ENCODE measurements at regions of chr12 and their contacts with region 1.

Region 1: DNA sequence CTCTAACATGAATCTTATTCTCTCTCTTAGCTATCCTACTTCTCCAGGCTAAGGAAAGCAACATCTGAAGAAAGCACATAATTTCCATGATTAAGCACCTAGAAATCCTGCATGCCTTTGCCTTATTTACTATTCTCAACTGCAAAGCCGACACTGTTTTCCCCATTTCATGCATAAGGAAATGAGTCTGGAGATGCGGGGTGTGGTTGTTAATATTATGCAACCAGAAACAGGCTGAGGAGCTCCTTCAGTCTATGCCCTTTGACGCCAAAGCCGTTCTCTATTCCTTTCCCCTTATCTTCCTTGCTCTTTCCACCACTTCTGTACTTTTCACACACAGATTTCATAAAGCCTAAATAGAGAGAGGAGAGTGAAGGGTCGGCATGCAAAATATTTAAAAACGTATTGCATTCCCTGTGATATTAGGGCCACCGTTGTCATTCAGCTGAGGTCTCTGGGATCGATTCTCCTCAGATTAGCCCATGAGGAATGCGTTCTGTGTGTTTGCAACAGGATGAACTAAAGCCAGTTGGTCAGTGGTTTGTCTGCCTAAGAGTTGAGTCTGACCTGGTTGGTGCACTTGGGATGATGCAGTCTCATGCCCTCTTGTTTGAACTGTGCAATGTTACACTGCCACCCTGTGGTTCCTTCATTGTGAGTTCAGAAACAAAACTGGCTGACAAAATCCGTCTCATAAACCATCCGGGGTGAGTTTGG is 53.1 kb upstream of the PLEKHG7 start:
- DNase-seq: peak; percentile 65
- H3K4me3 ChIP-seq: no peak overlapping the region; a peak in 1 of 4 replicates
- H3K27ac ChIP-seq: no peak overlapping the region
- H3K4me1 ChIP-seq: no peaks in the 10 kb centered on the region; a peak in 1 of 4 replicates
- H3K27me3 ChIP-seq: no peaks in the 10 kb centered on the region
- CTCF ChIP-seq: peak; percentile 80
- EP300 ChIP-seq: no peak
- RAD21 ChIP-seq: peak; percentile 94

Region 2: DNA sequence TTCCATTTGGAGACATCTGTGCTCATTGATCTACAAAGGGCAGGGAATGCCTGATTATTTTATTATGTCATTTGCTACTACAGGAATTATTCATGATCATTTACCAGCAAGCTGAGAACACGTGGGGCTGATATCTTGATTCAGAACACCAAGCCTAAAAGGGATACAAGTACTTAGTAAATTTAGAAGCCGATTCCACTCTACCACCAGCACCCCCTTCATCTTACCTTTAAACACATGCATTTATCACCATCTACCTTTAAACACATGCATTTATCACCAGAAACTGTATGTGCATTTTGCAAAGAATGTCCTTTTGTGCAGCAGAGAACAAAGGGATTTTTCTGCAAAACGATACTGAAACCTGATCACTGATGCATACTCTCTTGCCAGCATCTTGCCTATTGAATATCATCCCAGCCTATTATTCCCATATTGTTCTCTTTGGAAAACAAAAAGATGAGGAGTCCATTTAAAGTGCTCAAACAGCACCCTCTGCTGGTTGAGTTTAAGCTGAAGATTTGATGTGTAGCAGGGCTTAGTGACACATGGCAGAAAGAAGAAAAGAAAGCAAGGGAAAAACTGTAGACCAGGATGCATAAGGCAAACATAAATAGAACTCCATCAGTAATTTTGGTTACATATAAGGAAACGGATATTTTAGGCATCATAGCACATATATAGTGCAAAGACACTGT is 79.5 kb before region 1 on chr12:
- CTCF ChIA-PET with region 1: interaction called, 15 read pairs
- POLR2A ChIA-PET with region 1: no interaction called
- DNase-seq: peak; percentile 49
- H3K4me3 ChIP-seq: no peak overlapping the region; a peak in 1 of 4 replicates
- H3K27ac ChIP-seq: peak overlapping the region in 1 of 2 experiments; percentile 60; a peak in 2 of 4 replicates
- H3K4me1 ChIP-seq: no peaks in the 10 kb centered on the region; a peak in 2 of 4 replicates
- H3K27me3 ChIP-seq: no peaks in the 10 kb centered on the region
- CTCF ChIP-seq: peak; percentile 86
- EP300 ChIP-seq: no peak
- RAD21 ChIP-seq: peak; percentile 94

Region 3: GRCh38 chr12:93127582-93128331 is 478.1 kb after region 1 on chr12:
- CTCF ChIA-PET with region 1: no interaction called
- POLR2A ChIA-PET with region 1: no interaction called
- DNase-seq: no peak
- H3K4me3 ChIP-seq: no peak overlapping the region
- H3K27ac ChIP-seq: no peak overlapping the region
- H3K4me1 ChIP-seq: peaks cover 0 to 3% of the 10 kb centered on the region in 2 experiments; a peak in 1 of 4 replicates
- H3K27me3 ChIP-seq: no peaks in the 10 kb centered on the region
- CTCF ChIP-seq: no peak
- EP300 ChIP-seq: no peak
- RAD21 ChIP-seq: no peak

Measured in SK-N-SH (cell line).